MCF 10A (cell line): ENCODE measurements at regions of chr5 and their contacts with region 1.

Region 1: GRCh38 chr5:45521067-45521466 is 175.1 kb downstream of the HCN1 start:
- DNase-seq: peak; percentile 74
- H3K4me3 Mint-ChIP-seq: no peak overlapping the region
- H3K27ac Mint-ChIP-seq: no peak overlapping the region
- H3K4me1 Mint-ChIP-seq: no peaks in the 10 kb centered on the region
- H3K27me3 Mint-ChIP-seq: no peaks in the 10 kb centered on the region
- CTCF ChIP-seq: peak; percentile 75

Region 2: GRCh38 chr5:45639038-45639437 is 118.0 kb after region 1 on chr5:
- CTCF ChIA-PET with region 1: no interaction called
- POLR2A ChIA-PET with region 1: no interaction called
- intact Hi-C with region 1: loop called (anchors 10 kb)
- DNase-seq: peak; percentile 7
- H3K4me3 Mint-ChIP-seq: no peak overlapping the region
- H3K27ac Mint-ChIP-seq: no peak overlapping the region
- H3K4me1 Mint-ChIP-seq: peaks cover 11% of the 10 kb centered on the region
- H3K27me3 Mint-ChIP-seq: no peaks in the 10 kb centered on the region
- CTCF ChIP-seq: peak; percentile 34

Region 3: GRCh38 chr5:45774528-45774927 is 253.5 kb after region 1 on chr5:
- CTCF ChIA-PET with region 1: interaction called, 3 read pairs
- POLR2A ChIA-PET with region 1: no interaction called
- intact Hi-C with region 1: loop called (anchors 2 kb)
- DNase-seq: peak; percentile 24
- H3K4me3 Mint-ChIP-seq: no peak overlapping the region
- H3K27ac Mint-ChIP-seq: no peak overlapping the region
- H3K4me1 Mint-ChIP-seq: no peaks in the 10 kb centered on the region
- H3K27me3 Mint-ChIP-seq: no peaks in the 10 kb centered on the region
- CTCF ChIP-seq: peak; percentile 50